ENCODE measurements at regions of chr3 and their contacts with region 1.

Region 1: DNA sequence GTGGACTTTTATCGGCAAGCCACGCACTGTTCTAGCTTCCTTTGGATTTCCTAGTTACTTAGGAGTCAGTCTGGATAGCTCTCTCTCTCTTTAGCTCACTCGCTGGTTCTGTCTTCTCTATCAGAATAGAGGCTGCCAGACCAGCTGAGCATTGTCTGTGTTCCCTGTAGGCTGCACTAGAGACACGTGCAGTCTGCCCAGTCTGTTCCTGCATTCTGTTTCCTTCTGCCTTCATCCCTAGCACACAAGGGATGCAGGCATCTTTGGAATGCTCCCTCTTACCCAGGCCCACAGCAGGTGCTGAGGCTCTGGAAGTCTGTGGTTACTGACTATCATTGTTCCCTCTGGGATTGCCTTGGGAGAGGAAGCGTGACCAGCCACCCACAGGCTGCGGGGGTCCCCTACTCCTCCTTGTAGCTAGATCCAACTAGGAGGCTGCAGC is 322.8 kb downstream of the ZNF621 start:
- DNase-seq: peak; percentile 29
- ATAC-seq: peak; percentile 58
- H3K4me3 ChIP-seq: no peak overlapping the region
- H3K27ac ChIP-seq: no peak overlapping the region
- H3K4me1 ChIP-seq: peaks cover 72% of the 10 kb centered on the region
- H3K27me3 ChIP-seq: no peaks in the 10 kb centered on the region
- CTCF ChIP-seq: peak; percentile 63
- EP300 ChIP-seq: no peak
- POLR2A ChIP-seq: no peak
- RAD21 ChIP-seq: no peak

Region 2: DNA sequence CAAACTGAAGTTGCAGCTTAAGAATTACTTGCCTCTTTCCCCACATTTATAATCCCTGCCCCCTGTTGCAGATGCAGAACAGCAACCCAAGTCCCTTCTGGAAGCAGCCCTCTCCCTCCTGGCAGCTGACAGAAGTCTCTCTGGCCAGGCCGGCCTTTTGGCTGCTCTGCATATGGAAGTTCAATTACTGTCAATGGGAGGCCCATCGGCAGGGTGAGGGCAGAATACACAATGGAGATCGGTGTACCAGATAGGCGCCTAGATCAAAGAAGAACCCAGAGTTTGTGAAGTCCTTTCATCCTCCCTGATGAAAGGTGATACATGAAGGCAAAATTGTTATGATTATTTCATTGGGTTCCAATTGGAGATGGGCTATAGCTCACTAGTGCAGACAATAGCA is 23.8 kb after region 1 on chr3:
- CTCF ChIA-PET with region 1: no interaction called
- POLR2A ChIA-PET with region 1: interaction called, 4 read pairs
- in situ Hi-C with region 1: no loop called
- intact Hi-C with region 1: loop called (anchors 1 kb)
- DNase-seq: peak; percentile 89
- ATAC-seq: peak; percentile 89
- H3K4me3 ChIP-seq: no peak overlapping the region
- H3K27ac ChIP-seq: no peak overlapping the region
- H3K4me1 ChIP-seq: peaks cover 77% of the 10 kb centered on the region
- H3K27me3 ChIP-seq: no peaks in the 10 kb centered on the region
- CTCF ChIP-seq: no peak
- EP300 ChIP-seq: peak in 1 of 2 experiments; percentile 74; a peak in 2 of 4 replicates
- POLR2A ChIP-seq: no peak
- RAD21 ChIP-seq: no peak

Region 3: GRCh38 chr3:40911928-40912327 is 64.4 kb after region 1 on chr3:
- CTCF ChIA-PET with region 1: no interaction called
- POLR2A ChIA-PET with region 1: interaction called, 3 read pairs
- in situ Hi-C with region 1: no loop called
- intact Hi-C with region 1: loop called (anchors 1 kb)
- DNase-seq: peak; percentile 87
- ATAC-seq: peak; percentile 87
- H3K4me3 ChIP-seq: peak overlapping the region in 1 of 3 experiments; percentile 9; a peak in 2 of 6 replicates
- H3K27ac ChIP-seq: peak overlapping the region; percentile 63
- H3K4me1 ChIP-seq: peaks cover 64% of the 10 kb centered on the region
- H3K27me3 ChIP-seq: no peaks in the 10 kb centered on the region
- CTCF ChIP-seq: no peak
- EP300 ChIP-seq: peak in 1 of 2 experiments; percentile 75; a peak in 2 of 4 replicates
- POLR2A ChIP-seq: no peak
- RAD21 ChIP-seq: no peak

Region 4: DNA sequence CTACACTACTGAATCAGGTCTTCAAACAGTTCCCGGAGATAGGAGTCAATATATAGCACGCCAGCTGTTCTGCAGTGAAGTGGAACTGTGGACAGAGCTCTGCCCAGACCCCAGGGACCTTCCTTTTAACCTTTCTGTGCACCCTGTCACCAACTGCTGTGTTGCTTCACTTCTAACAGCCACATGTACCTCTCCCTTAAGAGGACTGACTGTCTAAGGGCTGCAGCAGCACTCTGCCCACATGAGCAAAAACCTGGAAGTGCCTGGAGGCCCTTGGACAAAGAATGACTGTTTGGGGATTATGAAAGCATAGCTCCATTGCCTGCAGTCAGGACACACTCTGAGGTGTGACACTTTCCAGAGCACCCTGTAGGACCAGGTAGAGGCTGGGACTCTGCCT is 263.4 kb after region 1 on chr3:
- CTCF ChIA-PET with region 1: no interaction called
- POLR2A ChIA-PET with region 1: no interaction called
- in situ Hi-C with region 1: no loop called
- intact Hi-C with region 1: no loop called
- DNase-seq: peak; percentile 13
- ATAC-seq: peak; percentile 69
- H3K4me3 ChIP-seq: no peak overlapping the region
- H3K27ac ChIP-seq: no peak overlapping the region
- H3K4me1 ChIP-seq: peaks cover 33% of the 10 kb centered on the region
- H3K27me3 ChIP-seq: no peaks in the 10 kb centered on the region
- CTCF ChIP-seq: no peak
- EP300 ChIP-seq: no peak
- POLR2A ChIP-seq: no peak
- RAD21 ChIP-seq: no peak

Measured in HepG2 (cell line).